CD8-positive, alpha-beta T cell (primary cell): ENCODE measurements at regions of chr19 and their contacts with region 1.

Region 1: DNA sequence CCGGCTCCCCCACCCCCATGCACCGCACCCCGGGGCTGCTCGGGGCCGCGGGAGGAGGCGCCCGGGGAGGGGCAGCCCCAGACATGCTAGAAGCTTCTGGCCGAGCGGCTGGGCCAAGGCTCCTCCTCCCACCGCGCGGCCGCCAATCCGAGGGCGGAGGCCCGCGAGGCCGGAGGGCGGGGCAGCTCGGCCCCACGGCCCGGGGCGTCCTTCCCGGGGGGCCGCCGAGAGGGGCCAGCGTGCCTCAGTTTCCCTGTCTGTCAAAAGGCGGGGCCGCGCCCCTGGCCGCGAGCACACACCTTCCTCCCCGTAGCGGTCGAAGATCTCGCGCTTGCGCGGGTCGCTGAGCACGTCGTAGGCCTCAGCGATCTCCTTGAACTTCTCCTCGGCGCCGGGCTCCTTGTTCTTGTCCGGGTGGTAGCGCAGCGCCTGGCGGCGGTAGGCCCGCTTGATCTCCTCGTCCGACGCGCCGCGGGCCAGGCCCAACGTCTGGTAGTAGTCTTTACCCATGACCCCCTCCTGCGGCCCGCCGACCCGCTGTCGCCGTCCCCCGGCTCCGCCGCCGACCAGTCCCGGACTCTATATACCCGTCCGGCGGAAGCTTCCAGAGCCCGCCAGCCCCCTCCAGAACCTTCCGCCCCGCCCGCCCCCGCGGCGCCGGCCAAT is at the start of gene DNAJB1:
- DNase-seq: peak in 7 of 9 experiments; percentile 51 to 82 (median 61)
- ATAC-seq: peak; percentile 2
- H3K4me3 ChIP-seq: peak within 1 kb of the TSS; percentile 80 to 97
- H3K4me3 Mint-ChIP-seq: peak within 1 kb of the TSS; percentile 95
- H3K27ac ChIP-seq: peak within 1 kb of the TSS; percentile 97 to 99
- H3K27ac Mint-ChIP-seq: peak within 1 kb of the TSS; percentile 97
- H3K4me1 ChIP-seq: peaks cover 68% of the 10 kb centered on the region
- H3K4me1 Mint-ChIP-seq: peaks cover 67% of the 10 kb centered on the region
- H3K27me3 ChIP-seq: no peaks in the 10 kb centered on the region
- H3K27me3 Mint-ChIP-seq: no peaks in the 10 kb centered on the region
- CTCF ChIP-seq: no peak
- total RNA-seq, gene DNAJB1: 963 to 995 TPM

Region 2: DNA sequence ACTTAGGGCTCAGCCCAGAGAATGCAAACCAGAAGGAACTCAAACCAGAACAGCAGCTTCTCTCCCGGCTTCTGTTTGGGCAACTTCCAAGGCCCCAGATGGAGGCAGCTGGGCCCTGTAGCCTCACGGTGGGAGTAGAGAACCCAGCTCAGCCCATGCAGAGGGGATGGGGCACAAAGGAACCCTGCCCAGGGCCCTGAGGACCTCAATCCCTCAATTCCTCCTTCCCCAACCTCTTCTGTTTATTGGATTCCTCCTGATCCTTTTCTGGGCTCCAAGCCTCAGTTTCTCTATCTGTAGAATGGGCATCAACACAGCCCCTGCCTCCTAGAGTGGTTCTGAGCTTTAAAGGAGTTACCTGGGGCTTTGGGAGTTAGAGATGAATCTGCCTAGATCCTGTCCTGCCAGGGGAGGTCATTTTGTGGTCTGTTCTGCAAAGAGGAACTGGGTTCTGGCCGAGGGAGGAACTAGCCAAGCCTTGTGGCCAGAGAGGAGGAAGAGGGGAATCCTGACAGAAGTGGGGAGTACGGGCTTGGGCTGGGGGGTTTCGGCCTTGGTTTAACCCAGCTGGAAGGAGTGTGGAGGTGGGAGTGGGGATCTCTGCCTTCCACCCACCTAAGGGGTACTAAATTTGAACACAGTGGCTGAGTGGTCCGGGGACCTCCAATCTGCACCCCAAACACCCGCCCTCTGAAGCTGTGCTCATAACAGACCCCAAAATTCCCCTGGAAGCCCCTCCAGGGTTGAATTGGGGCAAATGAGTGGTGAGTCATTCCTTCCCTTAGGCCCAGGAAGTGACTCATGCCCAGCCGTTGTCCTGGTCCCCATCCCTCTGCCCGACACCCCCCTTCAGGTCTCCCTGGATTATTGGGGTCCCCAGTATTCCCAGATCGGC is 134.1 kb before region 1 on chr19:
- CTCF ChIA-PET with region 1: interaction called, 3 read pairs
- POLR2A ChIA-PET with region 1: interaction called, 5 read pairs
- intact Hi-C with region 1: loop called in 1 of 2 experiments (anchors 5 kb)
- DNase-seq: peak in 7 of 9 experiments; percentile 52 to 89 (median 73)
- ATAC-seq: peak; percentile 10
- H3K4me3 ChIP-seq: peak overlapping the region; percentile 69 to 82
- H3K4me3 Mint-ChIP-seq: peak overlapping the region; percentile 90
- H3K27ac ChIP-seq: peak overlapping the region; percentile 75 to 97
- H3K27ac Mint-ChIP-seq: peak overlapping the region; percentile 94
- H3K4me1 ChIP-seq: peaks cover 39% of the 10 kb centered on the region
- H3K4me1 Mint-ChIP-seq: peaks cover 41% of the 10 kb centered on the region
- H3K27me3 ChIP-seq: no peaks in the 10 kb centered on the region
- H3K27me3 Mint-ChIP-seq: no peaks in the 10 kb centered on the region
- CTCF ChIP-seq: no peak

Region 3: GRCh38 chr19:14496028-14496833 is 21.7 kb before region 1 on chr19 and contains the start of gene GIPC1:
- CTCF ChIA-PET with region 1: interaction called, 3 read pairs
- POLR2A ChIA-PET with region 1: interaction called, 26 read pairs
- intact Hi-C with region 1: loop called in 1 of 2 experiments (anchors 1 kb)
- DNase-seq: peak; percentile 53 to 89 (median 80)
- ATAC-seq: peak; percentile 86
- H3K4me3 ChIP-seq: peak within 1 kb of the TSS; percentile 62 to 97
- H3K4me3 Mint-ChIP-seq: peak within 1 kb of the TSS; percentile 81
- H3K27ac ChIP-seq: peak within 1 kb of the TSS; percentile 42 to 58
- H3K27ac Mint-ChIP-seq: peak within 1 kb of the TSS; percentile 90
- H3K4me1 ChIP-seq: peaks cover 19% of the 10 kb centered on the region
- H3K4me1 Mint-ChIP-seq: peaks cover 24% of the 10 kb centered on the region
- H3K27me3 ChIP-seq: no peaks in the 10 kb centered on the region
- H3K27me3 Mint-ChIP-seq: no peaks in the 10 kb centered on the region
- CTCF ChIP-seq: no peak
- total RNA-seq, gene GIPC1: 15.6 to 16.0 TPM

Region 4: DNA sequence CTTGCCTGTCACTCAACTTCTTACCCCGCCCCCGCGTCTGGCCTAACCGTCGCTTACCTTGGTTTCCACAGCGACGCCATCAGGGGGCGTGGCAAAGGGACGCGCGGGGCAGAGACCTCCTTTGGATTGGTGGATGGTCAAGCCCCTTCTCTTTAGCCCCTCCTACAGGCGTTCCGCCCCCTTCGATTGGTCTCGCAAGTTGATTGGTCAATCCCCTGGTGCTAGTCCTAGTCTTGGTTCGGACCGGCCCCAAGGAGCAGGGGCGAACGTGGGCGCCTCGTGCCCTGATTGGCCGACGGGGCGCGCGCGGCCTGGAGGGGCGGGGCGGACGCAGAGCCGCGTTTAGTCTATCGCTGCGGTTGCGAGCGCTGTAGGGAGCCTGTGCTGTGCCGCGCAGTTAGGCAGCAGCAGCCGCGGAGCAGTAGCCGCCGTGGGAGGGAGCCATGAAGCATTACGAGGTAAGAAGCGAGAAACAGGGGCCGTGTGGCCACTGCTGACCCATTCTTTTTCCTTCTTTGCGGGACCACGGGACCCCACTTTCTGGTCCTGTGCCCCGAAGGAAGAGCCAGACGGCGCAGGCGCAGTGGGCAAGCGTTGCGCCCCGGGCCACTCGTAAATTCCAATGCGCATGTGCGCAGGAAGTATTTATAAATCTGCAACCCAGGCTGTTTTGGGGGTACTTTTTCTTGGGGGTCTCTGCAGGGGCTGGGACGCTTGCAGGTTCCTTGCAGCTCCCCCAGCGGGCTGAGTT is 11.5 kb after region 1 on chr19 and contains the start of gene TECR:
- CTCF ChIA-PET with region 1: interaction called, 3 read pairs
- POLR2A ChIA-PET with region 1: interaction called, 50 read pairs
- intact Hi-C with region 1: loop called (anchors 1 kb)
- DNase-seq: peak; percentile 100
- ATAC-seq: peak; percentile 93
- H3K4me3 ChIP-seq: peak within 1 kb of the TSS; percentile 85 to 97
- H3K4me3 Mint-ChIP-seq: peak within 1 kb of the TSS; percentile 97
- H3K27ac ChIP-seq: peak within 1 kb of the TSS; percentile 88 to 89
- H3K27ac Mint-ChIP-seq: peak within 1 kb of the TSS; percentile 98
- H3K4me1 ChIP-seq: peaks cover 28% of the 10 kb centered on the region
- H3K4me1 Mint-ChIP-seq: peaks cover 54% of the 10 kb centered on the region
- H3K27me3 ChIP-seq: no peaks in the 10 kb centered on the region
- H3K27me3 Mint-ChIP-seq: no peaks in the 10 kb centered on the region
- CTCF ChIP-seq: no peak
- total RNA-seq, gene TECR: 300 to 325 TPM

Region 5: DNA sequence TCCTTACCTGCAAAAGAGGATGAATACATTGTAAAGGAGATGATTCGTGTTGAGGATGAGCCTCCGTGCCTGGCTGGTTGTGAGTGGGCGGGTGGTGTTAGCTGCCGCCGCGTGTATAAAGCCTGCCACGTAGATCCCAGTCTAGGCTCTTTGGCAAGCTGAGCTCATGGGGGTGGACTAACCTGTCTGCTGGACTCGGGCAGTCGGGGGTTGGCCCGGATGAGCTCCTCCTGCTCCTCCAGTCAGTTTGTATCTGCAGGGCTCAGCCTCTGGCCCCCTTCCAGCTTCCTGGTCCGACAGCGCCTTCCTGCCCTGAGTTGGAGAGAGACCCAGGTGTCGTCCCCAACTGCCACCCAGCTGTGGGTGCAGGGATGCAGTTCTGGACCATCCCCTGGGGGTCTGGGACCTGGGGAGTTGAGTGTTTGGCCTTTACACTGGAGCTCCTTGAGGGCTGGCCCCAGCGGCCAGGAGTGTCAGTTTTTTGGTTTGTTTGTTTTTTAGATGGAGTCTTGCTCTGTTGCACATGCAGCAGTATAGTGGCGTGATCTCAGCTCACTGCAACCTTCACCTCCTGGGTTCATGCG is 32.3 kb after region 1 on chr19:
- CTCF ChIA-PET with region 1: interaction called, 4 read pairs
- POLR2A ChIA-PET with region 1: interaction called, 16 read pairs
- intact Hi-C with region 1: no loop called
- DNase-seq: no peak
- ATAC-seq: no peak
- H3K4me3 ChIP-seq: no peak overlapping the region
- H3K4me3 Mint-ChIP-seq: no peak overlapping the region
- H3K27ac ChIP-seq: peak overlapping the region; percentile 14 to 15
- H3K27ac Mint-ChIP-seq: peak overlapping the region; percentile 79
- H3K4me1 ChIP-seq: peaks cover 41% of the 10 kb centered on the region
- H3K4me1 Mint-ChIP-seq: peaks cover 49% of the 10 kb centered on the region
- H3K27me3 ChIP-seq: no peaks in the 10 kb centered on the region
- H3K27me3 Mint-ChIP-seq: no peaks in the 10 kb centered on the region
- CTCF ChIP-seq: no peak

Region 6: DNA sequence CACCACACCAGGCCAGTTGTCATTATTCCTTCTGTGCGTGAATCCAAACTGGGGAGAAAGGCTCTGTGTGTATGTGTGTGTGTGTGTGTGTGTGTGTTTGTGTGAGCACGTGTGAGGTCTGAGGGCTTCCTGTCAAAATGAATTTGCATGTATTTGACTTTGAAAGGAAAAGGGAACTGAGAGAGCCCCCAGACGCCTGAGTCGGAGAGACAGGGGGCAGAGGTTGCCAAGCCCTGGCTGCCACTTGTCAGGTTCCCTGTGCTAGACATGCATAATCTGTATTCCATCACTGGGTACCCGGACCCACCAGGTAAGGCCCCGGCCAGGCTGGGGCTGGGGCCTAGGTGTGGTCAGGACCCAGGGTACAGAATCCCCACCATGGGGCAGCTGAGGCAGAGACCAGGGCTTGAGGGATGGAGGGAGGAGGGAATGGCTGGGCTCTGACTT is 64.9 kb after region 1 on chr19 and contains the start of gene CLEC17A:
- CTCF ChIA-PET with region 1: no interaction called
- POLR2A ChIA-PET with region 1: no interaction called
- intact Hi-C with region 1: no loop called
- DNase-seq: no peak
- ATAC-seq: no peak
- H3K4me3 ChIP-seq: no peak within 1 kb of the TSS
- H3K4me3 Mint-ChIP-seq: peak within 1 kb of the TSS; percentile 32
- H3K27ac ChIP-seq: no peak within 1 kb of the TSS
- H3K27ac Mint-ChIP-seq: no peak within 1 kb of the TSS
- H3K4me1 ChIP-seq: no peaks in the 10 kb centered on the region
- H3K4me1 Mint-ChIP-seq: no peaks in the 10 kb centered on the region
- H3K27me3 ChIP-seq: no peaks in the 10 kb centered on the region
- H3K27me3 Mint-ChIP-seq: peaks cover 3% of the 10 kb centered on the region
- CTCF ChIP-seq: no peak
- total RNA-seq, gene CLEC17A: 0.35 TPM in 1 of 2 experiments, not detected in the other